Tibial artery (tissue), 4 donors: ENCODE measurements at regions of chr10 and their contacts with region 1.

Region 1: GRCh38 chr10:3723766-3724165 is 61.2 kb downstream of the KLF6 start:
- DNase-seq: no peak
- H3K4me3 ChIP-seq: no peak overlapping the region
- H3K27ac ChIP-seq: no peak overlapping the region
- H3K4me1 ChIP-seq: no peaks in the 10 kb centered on the region
- H3K27me3 ChIP-seq: no peaks in the 10 kb centered on the region
- CTCF ChIP-seq: no peak

Region 2: GRCh38 chr10:3775696-3776551 is 52.2 kb after region 1 on chr10:
- intact Hi-C with region 1: loop called (anchors 2 kb)
- DNase-seq: no peak
- H3K4me3 ChIP-seq: no peak overlapping the region
- H3K27ac ChIP-seq: peak overlapping the region; percentile 100
- H3K4me1 ChIP-seq: peaks cover 0 to 62% (median 44%) of the 10 kb centered on the region in 4 donors
- H3K27me3 ChIP-seq: no peaks in the 10 kb centered on the region
- CTCF ChIP-seq: no peak